ENCODE measurements at regions of chr20 and their contacts with region 1.

Region 1: GRCh38 chr20:51595058-51595532 is 52.6 kb upstream of the NFATC2 start:
- DNase-seq: peak; percentile 74 to 95
- H3K4me3 ChIP-seq: no peak overlapping the region
- H3K27ac ChIP-seq: peak overlapping the region; percentile 6 to 66
- H3K4me1 ChIP-seq: peaks cover 0 to 13% of the 10 kb centered on the region in 2 donors
- H3K27me3 ChIP-seq: no peaks in the 10 kb centered on the region
- CTCF ChIP-seq: peak; percentile 85 to 90 (median 85)

Region 2: DNA sequence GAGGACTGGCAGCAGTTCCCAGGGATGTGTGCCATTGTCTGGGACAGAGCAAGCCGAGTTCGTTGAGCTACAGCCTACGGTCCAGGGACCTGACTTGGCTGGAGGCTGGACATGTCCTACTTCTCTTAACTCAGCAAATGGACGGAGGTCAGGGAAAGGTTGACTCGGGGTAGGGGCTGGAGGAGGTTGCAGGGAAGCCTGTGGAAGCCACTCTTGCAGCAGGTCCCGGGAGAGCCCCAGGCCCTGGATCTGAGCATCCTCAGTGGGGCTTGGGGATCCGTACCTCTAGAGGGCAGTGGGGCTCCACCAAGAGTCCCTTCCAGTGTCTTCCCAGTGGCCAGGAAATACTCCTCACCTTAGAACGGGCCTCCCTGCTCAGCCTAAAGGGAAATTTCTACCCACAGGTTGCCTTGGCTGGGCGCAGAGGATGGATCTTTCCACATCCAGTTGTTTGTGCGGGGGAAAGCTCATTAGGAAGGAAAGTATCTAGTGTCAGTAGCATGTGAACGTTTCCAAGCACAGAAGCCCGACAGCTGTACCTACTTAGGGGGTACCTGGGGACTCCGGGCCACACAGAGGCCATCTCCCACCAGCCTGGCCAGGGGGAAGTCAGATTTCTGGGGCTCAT is 222.8 kb before region 1 on chr20:
- intact Hi-C with region 1: loop called (anchors 1 kb)
- DNase-seq: peak in 1 of 2 donors; percentile 76
- H3K4me3 ChIP-seq: no peak overlapping the region
- H3K27ac ChIP-seq: no peak overlapping the region
- H3K4me1 ChIP-seq: peaks cover 0 to 3% of the 10 kb centered on the region in 2 donors
- H3K27me3 ChIP-seq: no peaks in the 10 kb centered on the region
- CTCF ChIP-seq: peak; percentile 66 to 89 (median 84)

Region 3: GRCh38 chr20:51531141-51531710 is 63.9 kb before region 1 on chr20:
- intact Hi-C with region 1: loop called (anchors 1 kb)
- DNase-seq: peak in 1 of 2 donors; percentile 61
- H3K4me3 ChIP-seq: no peak overlapping the region
- H3K27ac ChIP-seq: peak overlapping the region in 1 of 2 donors; percentile 76
- H3K4me1 ChIP-seq: peaks cover 7 to 11% of the 10 kb centered on the region in 2 donors
- H3K27me3 ChIP-seq: no peaks in the 10 kb centered on the region
- CTCF ChIP-seq: no peak

Region 4: GRCh38 chr20:51562332-51563155 is 32.6 kb before region 1 on chr20:
- intact Hi-C with region 1: loop called (anchors 2 kb)
- DNase-seq: peak; percentile 53 to 95
- H3K4me3 ChIP-seq: peak overlapping the region; percentile 60 to 69
- H3K27ac ChIP-seq: peak overlapping the region; percentile 92 to 93
- H3K4me1 ChIP-seq: peaks cover 6 to 24% of the 10 kb centered on the region in 2 donors
- H3K27me3 ChIP-seq: no peaks in the 10 kb centered on the region
- CTCF ChIP-seq: peak in 1 of 3 experiments; percentile 46

Region 5: DNA sequence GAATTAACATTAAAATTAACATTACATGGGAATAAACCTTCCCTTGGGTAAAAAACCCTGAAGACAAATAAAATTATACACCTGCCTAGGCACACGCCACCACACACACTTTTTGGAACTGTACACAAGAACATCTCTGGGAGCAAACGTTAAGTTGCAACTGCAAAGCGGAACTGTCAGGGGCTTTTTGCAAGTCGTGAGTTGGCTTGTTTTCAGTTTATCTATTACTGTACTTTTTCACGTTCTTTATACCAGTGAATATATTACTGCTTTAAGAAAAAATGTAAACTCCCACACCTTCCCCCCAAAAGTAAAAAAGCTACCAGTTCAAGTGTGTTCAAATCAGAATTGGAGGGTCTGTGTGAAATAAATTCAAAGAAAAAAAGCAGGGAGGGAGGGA is 13.0 kb after region 1 on chr20:
- intact Hi-C with region 1: no loop called
- DNase-seq: no peak
- H3K4me3 ChIP-seq: no peak overlapping the region
- H3K27ac ChIP-seq: no peak overlapping the region
- H3K4me1 ChIP-seq: no peaks in the 10 kb centered on the region
- H3K27me3 ChIP-seq: no peaks in the 10 kb centered on the region
- CTCF ChIP-seq: no peak

Region 6: DNA sequence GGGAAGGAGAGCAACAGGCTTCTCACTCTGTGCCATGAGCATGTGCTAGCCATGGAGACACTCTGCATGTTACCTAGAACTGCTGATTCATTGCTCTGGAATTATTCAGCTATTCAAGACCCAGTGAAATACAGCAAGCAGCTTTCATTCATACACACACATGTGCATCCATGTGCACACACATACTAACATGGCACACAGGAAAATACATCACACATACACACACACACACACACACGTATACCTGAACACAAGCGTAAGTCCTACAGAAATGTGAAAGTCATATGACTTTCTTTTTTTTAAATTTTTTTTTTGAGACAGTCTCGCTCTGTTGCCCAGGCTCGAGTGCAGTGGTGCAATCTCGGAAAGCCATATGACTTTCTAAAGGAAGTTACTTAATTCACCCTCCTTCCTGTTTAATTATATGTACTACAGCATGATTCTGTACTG is 55.6 kb after region 1 on chr20:
- intact Hi-C with region 1: no loop called
- DNase-seq: no peak
- H3K4me3 ChIP-seq: no peak overlapping the region
- H3K27ac ChIP-seq: no peak overlapping the region
- H3K4me1 ChIP-seq: no peaks in the 10 kb centered on the region
- H3K27me3 ChIP-seq: no peaks in the 10 kb centered on the region
- CTCF ChIP-seq: no peak

Region 7: DNA sequence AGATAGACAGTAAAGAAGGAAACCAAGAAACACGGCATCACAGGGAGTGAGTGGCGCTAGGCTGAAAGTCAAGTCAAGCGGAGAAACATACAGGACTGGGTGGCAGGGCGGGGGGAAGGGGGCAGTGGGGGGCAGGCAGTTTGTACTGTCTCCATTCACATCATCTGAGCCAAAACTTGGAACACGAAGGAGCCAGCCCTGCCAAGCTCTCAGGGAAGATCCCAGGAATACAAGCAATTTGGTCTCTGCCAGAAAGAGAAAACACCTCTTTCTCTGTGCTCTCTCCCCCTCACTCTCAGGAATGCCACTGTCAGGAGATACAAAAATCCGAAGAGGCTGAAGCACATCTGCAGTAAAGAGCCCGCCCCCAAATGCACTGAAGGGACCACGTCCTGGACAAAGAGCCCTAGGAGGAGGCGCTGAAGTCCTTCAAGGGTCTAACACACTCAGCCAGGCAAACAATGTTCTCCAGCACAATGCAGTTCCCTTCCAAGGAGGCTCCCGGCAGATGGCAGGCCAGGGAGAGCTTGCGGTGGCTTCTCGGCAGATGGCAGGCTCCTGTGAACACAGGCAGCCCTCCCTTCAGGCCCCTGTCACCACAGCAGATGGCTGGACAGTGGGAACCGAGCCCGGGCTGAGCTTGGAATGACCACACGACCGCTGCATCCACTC is 83.1 kb after region 1 on chr20:
- intact Hi-C with region 1: no loop called
- DNase-seq: no peak
- H3K4me3 ChIP-seq: no peak overlapping the region
- H3K27ac ChIP-seq: peak overlapping the region in 1 of 2 donors; percentile 5
- H3K4me1 ChIP-seq: no peaks in the 10 kb centered on the region
- H3K27me3 ChIP-seq: no peaks in the 10 kb centered on the region
- CTCF ChIP-seq: peak in 1 of 3 experiments; percentile 15

Region 8: DNA sequence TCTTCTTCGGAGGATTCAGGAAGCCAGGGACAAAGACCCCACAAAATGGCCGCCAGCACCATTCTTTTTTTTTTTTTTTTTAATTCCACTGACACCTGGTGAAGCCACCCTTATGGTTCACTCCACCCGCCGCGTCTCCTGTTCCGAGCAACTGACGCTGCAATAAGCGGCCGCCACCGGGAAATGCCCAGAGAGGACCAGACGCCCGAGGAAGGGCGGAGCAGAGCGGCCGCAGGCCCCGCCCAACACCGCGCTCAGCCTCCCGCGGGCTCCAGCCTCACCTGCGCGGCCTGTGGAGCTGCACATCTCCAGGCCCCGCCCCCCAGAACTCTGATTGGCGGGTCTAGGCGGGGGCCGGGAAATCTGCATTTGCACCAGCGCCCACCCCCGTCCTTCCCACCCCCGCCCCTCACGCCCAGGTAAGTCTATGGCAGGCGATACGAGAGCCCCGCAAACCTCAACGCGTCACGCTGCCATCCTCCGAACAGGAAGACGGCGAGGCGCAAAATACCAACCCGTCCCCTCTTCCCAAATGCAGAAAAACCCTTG is 172.0 kb after region 1 on chr20:
- intact Hi-C with region 1: no loop called
- DNase-seq: peak; percentile 24 to 77
- H3K4me3 ChIP-seq: peak overlapping the region; percentile 64 to 87
- H3K27ac ChIP-seq: peak overlapping the region; percentile 52 to 80
- H3K4me1 ChIP-seq: no peaks in the 10 kb centered on the region
- H3K27me3 ChIP-seq: no peaks in the 10 kb centered on the region
- CTCF ChIP-seq: no peak